WTC11 (cell line): ENCODE measurements at regions of chr3 and their contacts with region 1.

Region 1: GRCh38 chr3:44198284-44199269 is 43.1 kb upstream of the TOPAZ1 start:
- DNase-seq: peak; percentile 77
- ATAC-seq: peak; percentile 95
- H3K4me3 Mint-ChIP-seq: no peak overlapping the region
- H3K27ac Mint-ChIP-seq: no peak overlapping the region
- H3K4me1 Mint-ChIP-seq: no peaks in the 10 kb centered on the region
- H3K27me3 Mint-ChIP-seq: no peaks in the 10 kb centered on the region
- CTCF ChIP-seq: peak; percentile 59

Region 2: DNA sequence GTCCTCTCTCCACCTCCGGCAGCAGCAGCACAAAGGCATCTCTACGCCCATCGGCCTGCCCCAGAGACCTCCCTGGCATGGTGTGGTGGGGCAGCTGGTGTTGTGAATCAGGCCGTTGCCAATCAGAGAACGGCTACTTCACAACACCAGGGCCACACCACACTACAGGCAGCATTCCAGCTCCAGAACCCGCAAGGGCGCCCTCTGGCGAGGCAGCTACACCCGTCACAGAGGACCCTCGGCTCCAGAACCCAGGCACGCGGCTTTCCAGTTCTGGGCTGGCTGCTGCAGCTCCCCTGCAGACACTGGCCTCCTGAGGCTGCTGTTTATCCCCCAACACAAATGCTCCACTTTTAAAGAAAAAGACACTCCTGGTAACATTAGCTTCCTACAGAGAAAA is 84.4 kb before region 1 on chr3:
- CTCF ChIA-PET with region 1: no interaction called
- POLR2A ChIA-PET with region 1: no interaction called
- DNase-seq: peak; percentile 86
- ATAC-seq: peak; percentile 94
- H3K4me3 Mint-ChIP-seq: no peak overlapping the region
- H3K27ac Mint-ChIP-seq: no peak overlapping the region
- H3K4me1 Mint-ChIP-seq: peaks cover 11% of the 10 kb centered on the region
- H3K27me3 Mint-ChIP-seq: peaks cover 7% of the 10 kb centered on the region
- CTCF ChIP-seq: peak; percentile 64

Region 3: DNA sequence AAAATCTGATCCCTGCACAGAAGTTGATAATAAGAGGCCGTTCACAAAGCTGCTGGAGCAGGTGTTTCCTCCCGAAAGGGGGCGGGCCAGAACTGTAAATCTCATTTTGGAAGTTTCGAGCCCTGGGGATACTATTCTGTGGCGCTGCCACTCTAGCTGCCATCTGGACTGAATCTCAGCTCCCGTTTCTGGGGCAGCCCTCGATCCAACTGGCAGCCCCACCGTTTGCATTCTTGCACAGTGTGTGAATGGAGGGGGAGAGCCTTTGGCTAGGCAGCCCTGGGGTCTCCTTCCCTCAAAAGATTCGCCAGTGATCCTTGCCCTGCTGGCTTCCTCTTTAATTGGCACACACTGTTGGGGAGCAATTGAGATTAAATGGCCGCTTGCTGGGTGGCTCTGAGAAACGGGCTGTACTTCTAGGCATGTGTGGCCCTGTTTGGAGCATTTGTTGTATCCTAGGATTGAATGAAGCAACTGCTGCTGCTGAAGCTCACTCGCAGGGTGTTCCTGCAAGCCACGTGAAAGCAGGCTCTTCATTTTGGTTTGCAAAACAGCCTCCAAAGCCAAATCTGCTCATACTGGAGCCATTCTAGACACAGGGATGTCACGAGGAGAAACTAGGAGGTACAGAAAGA is 14.1 kb before region 1 on chr3:
- CTCF ChIA-PET with region 1: interaction called, 11 read pairs
- POLR2A ChIA-PET with region 1: no interaction called
- DNase-seq: peak; percentile 13
- ATAC-seq: peak; percentile 87
- H3K4me3 Mint-ChIP-seq: peak overlapping the region; percentile 8; the same call in 1 of the 2 replicates
- H3K27ac Mint-ChIP-seq: no peak overlapping the region
- H3K4me1 Mint-ChIP-seq: peaks cover 16% of the 10 kb centered on the region
- H3K27me3 Mint-ChIP-seq: peaks cover 3% of the 10 kb centered on the region
- CTCF ChIP-seq: no peak